B cell (primary cell): ENCODE measurements at regions of chr11 and their contacts with region 1.

Region 1: DNA sequence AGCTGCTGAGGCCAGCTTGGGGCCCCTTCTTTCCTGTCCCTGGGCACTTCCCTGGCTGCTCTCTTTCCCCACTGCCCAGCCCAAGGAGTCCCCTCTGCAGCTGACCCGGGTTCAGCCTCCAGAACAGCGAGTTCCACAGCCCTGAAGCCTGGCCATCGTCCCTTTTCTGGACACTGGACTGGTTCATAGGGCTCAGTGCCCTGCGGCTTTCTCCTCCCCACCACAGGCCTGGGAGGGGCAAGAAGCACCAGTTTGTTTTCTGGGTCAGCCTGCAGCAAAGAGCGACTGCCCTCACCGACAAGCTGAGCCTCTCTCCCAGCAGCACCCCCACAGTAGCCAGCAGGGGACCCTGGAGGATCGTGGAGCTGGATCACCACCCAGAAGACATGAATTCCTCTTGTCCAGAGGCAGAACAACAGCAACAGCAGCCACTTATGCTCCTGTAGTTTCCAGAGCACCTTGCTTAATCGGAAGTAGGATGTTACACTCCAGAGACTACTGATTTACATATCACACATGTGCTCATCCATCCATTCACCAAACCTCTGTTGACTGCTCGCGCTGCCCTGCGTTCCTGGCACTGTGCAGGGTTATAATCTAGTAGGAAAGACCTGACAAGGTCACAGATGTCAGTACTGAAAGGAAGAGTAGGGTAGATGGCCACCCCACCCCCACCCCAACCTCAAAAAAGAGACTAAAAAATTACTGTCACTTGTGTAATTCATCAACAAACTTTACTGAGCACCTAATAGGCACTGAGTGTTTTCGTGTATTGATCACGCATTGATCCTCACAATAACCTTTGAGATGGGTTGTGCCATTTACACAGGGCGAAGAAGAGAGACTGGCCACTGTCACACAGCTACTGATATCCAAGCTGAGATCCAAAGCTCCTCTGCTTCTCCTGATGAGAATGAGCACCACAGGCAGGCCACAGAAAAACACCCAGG is 13.0 kb upstream of the CXCR5 start:
- DNase-seq: peak; percentile 86
- ATAC-seq: peak; percentile 61
- H3K4me3 ChIP-seq: peak overlapping the region; percentile 15 to 66 (median 48)
- H3K4me3 Mint-ChIP-seq: peak overlapping the region; percentile 90
- H3K27ac ChIP-seq: peak overlapping the region; percentile 93 to 99
- H3K27ac Mint-ChIP-seq: peak overlapping the region; percentile 99
- H3K4me1 ChIP-seq: peaks cover 61 to 72% of the 10 kb centered on the region in 2 donors
- H3K4me1 Mint-ChIP-seq: peaks cover 60% of the 10 kb centered on the region
- H3K27me3 ChIP-seq: no peaks in the 10 kb centered on the region
- H3K27me3 Mint-ChIP-seq: no peaks in the 10 kb centered on the region
- CTCF ChIP-seq: no peak

Region 2: GRCh38 chr11:118820412-118821357 is 50.0 kb before region 1 on chr11:
- CTCF ChIA-PET with region 1: interaction called, 10 read pairs
- POLR2A ChIA-PET with region 1: interaction called, 21 read pairs
- intact Hi-C with region 1: loop called (anchors 1 kb)
- DNase-seq: peak; percentile 93
- ATAC-seq: peak; percentile 86
- H3K4me3 ChIP-seq: peak overlapping the region in 4 of 5 experiments; percentile 5 to 39 (median 21)
- H3K4me3 Mint-ChIP-seq: peak overlapping the region; percentile 77
- H3K27ac ChIP-seq: peak overlapping the region; percentile 95 to 99
- H3K27ac Mint-ChIP-seq: peak overlapping the region; percentile 98
- H3K4me1 ChIP-seq: peaks cover 67% of the 10 kb centered on the region in 2 donors
- H3K4me1 Mint-ChIP-seq: peaks cover 58% of the 10 kb centered on the region
- H3K27me3 ChIP-seq: no peaks in the 10 kb centered on the region
- H3K27me3 Mint-ChIP-seq: no peaks in the 10 kb centered on the region
- CTCF ChIP-seq: no peak

Region 3: DNA sequence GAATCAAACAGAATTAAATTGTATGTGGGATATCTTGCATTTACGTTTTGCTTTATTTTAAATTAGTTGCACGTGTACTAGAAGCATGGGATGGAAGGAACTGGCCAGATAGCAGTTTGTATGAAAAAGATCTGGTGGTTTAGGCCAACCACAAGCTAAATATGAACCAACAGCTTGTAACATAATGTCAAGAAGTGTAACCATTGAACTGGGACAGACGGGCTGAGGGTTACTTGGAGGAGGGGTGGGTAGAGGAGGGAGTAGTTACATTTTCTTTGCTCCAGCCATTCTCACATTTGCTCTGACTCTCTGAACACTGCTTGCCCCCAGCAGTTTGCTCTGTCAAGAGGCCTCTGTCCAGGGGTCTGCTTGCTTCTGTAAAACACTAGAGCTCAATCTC is 18.7 kb before region 1 on chr11:
- CTCF ChIA-PET with region 1: interaction called, 5 read pairs
- POLR2A ChIA-PET with region 1: interaction called, 10 read pairs
- intact Hi-C with region 1: no loop called
- DNase-seq: peak; percentile 64
- ATAC-seq: peak; percentile 83
- H3K4me3 ChIP-seq: peak overlapping the region in 1 of 5 experiments; percentile 27
- H3K4me3 Mint-ChIP-seq: peak overlapping the region; percentile 60
- H3K27ac ChIP-seq: peak overlapping the region in 1 of 2 donors; percentile 5
- H3K27ac Mint-ChIP-seq: peak overlapping the region; percentile 81
- H3K4me1 ChIP-seq: peaks cover 21 to 23% of the 10 kb centered on the region in 2 donors
- H3K4me1 Mint-ChIP-seq: peaks cover 33% of the 10 kb centered on the region
- H3K27me3 ChIP-seq: no peaks in the 10 kb centered on the region
- H3K27me3 Mint-ChIP-seq: no peaks in the 10 kb centered on the region
- CTCF ChIP-seq: no peak

Region 4: DNA sequence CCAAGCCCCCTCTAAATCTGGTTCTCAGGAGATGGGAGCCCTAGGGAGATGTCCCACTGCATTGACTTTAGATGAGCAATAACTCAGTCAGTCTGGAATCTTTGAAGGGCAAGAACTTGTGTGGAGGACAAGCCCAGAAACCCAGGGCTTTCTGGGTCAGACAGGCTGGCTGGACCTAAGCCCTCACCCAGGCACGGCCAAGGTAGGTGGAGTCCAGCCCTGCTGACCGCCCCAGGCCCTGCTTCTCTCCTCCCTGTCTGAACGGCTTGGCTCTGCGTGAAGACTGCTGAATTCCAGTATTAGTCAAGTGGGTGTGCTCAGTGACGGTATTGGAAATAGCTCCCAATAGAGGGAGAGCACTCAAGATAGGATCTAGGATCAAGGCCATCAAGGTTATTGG is 19.1 kb after region 1 on chr11:
- CTCF ChIA-PET with region 1: interaction called, 19 read pairs
- POLR2A ChIA-PET with region 1: interaction called, 90 read pairs
- intact Hi-C with region 1: no loop called
- DNase-seq: peak; percentile 25
- ATAC-seq: no peak
- H3K4me3 ChIP-seq: peak overlapping the region in 2 of 5 experiments; percentile 97 to 99
- H3K4me3 Mint-ChIP-seq: peak overlapping the region; percentile 97
- H3K27ac ChIP-seq: peak overlapping the region; percentile 91 to 99
- H3K27ac Mint-ChIP-seq: peak overlapping the region; percentile 90
- H3K4me1 ChIP-seq: peaks cover 84 to 100% of the 10 kb centered on the region in 2 donors
- H3K4me1 Mint-ChIP-seq: peaks cover 93% of the 10 kb centered on the region
- H3K27me3 ChIP-seq: no peaks in the 10 kb centered on the region
- H3K27me3 Mint-ChIP-seq: no peaks in the 10 kb centered on the region
- CTCF ChIP-seq: no peak

Region 5: GRCh38 chr11:118928108-118928870 is 57.6 kb after region 1 on chr11:
- CTCF ChIA-PET with region 1: interaction called, 9 read pairs
- POLR2A ChIA-PET with region 1: no interaction called
- intact Hi-C with region 1: loop called (anchors 1 kb)
- DNase-seq: peak; percentile 99
- ATAC-seq: peak; percentile 56
- H3K4me3 ChIP-seq: peak overlapping the region; percentile 32 to 86 (median 66)
- H3K4me3 Mint-ChIP-seq: peak overlapping the region; percentile 99
- H3K27ac ChIP-seq: peak overlapping the region; percentile 96 to 99
- H3K27ac Mint-ChIP-seq: peak overlapping the region; percentile 98
- H3K4me1 ChIP-seq: peaks cover 40 to 58% of the 10 kb centered on the region in 2 donors
- H3K4me1 Mint-ChIP-seq: peaks cover 63% of the 10 kb centered on the region
- H3K27me3 ChIP-seq: no peaks in the 10 kb centered on the region
- H3K27me3 Mint-ChIP-seq: no peaks in the 10 kb centered on the region
- CTCF ChIP-seq: peak; percentile 87

Region 6: DNA sequence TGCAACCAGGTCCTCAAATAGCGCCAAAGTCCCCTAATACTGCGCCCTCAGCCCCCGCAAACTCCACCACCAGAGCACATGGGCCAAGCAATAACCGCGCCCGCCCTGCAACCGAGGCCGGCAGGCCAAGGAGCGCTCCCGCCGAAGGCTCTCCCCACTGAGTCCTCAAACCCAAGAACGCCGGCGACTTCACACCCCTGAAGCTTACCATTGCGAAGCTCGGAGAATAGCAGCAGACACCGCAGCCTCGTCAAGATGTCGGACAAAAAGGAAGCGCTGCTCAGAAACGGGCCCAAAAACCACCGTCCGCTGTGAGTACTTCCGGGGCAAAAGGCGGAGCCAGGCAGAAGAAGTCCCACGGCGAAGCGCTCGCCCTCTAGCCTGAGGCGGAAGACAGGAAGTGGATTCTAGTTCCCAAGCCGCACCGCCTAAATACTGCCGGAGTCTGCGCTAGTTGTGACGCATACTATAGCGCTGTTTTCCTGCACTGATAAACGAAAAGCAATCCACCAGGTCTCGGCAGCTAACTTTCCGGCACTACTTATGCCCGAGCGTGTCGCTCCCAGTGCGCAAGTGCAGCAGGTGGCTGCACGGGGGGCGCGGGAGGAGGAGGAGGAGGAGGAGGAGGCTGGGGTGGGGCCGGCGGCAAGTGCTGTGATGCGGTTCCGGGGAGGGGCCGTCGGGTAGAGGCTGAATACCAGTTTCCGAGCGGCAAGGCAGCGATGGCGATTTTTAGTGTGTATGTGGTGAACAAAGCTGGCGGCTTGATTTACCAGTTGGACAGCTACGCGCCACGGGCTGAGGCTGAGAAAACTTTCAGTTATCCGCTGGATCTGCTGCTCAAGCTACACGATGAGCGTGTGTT is 147.6 kb after region 1 on chr11 and contains the starts of genes RPS25 and TRAPPC4:
- CTCF ChIA-PET with region 1: no interaction called
- POLR2A ChIA-PET with region 1: no interaction called
- intact Hi-C with region 1: no loop called
- DNase-seq: peak; percentile 98
- ATAC-seq: peak; percentile 91
- H3K4me3 ChIP-seq: peak within 1 kb of the TSS; percentile 85 to 98 (median 93)
- H3K4me3 Mint-ChIP-seq: peak within 1 kb of the TSS; percentile 100
- H3K27ac ChIP-seq: peak within 1 kb of the TSS; percentile 91 to 92
- H3K27ac Mint-ChIP-seq: peak within 1 kb of the TSS; percentile 100
- H3K4me1 ChIP-seq: peaks cover 27 to 34% of the 10 kb centered on the region in 2 donors
- H3K4me1 Mint-ChIP-seq: peaks cover 46% of the 10 kb centered on the region
- H3K27me3 ChIP-seq: no peaks in the 10 kb centered on the region
- H3K27me3 Mint-ChIP-seq: no peaks in the 10 kb centered on the region
- CTCF ChIP-seq: no peak
- total RNA-seq, gene RPS25: 1,713 and 1,823 TPM in 2 replicates
- total RNA-seq, gene TRAPPC4: 61.5 and 64.5 TPM in 2 replicates